CD14-positive monocyte (primary cell): ENCODE measurements at regions of chr19 and their contacts with region 1.

Region 1: DNA sequence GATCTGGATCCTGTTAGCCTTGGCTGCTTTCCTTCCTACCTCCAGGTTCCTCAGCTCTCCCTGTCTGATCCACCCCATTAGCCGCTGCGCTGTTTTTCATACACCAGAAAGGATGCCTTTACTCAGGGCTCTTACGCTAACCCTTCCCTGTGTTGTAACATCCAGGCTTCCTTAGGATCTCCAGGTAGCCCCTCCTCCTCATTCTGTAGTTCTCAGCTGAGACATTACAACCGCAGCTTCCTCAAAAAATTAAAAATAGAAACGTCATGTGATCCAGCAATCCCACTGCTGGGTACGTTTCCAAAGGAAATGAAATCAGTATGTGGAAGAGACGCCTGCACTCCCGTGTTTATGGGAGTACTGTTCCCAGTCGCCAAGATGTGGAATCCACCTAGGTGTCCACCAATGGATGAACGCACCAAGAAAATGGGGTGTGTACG is 18.4 kb upstream of the MYADM start:
- DNase-seq: peak; percentile 73 to 93 (median 89)
- H3K4me3 ChIP-seq: peak overlapping the region in 1 of 3 experiments; percentile 65
- H3K4me3 Mint-ChIP-seq: peak overlapping the region; percentile 56 to 88
- H3K27ac ChIP-seq: peak overlapping the region; percentile 67 to 76
- H3K27ac Mint-ChIP-seq: peak overlapping the region; percentile 87 to 98 (median 94)
- H3K4me1 ChIP-seq: peaks cover 87% of the 10 kb centered on the region in 2 donors
- H3K4me1 Mint-ChIP-seq: peaks cover 72% of the 10 kb centered on the region
- H3K27me3 ChIP-seq: no peaks in the 10 kb centered on the region
- H3K27me3 Mint-ChIP-seq: peaks cover 2 to 5% (median 3%) of the 10 kb centered on the region in 3 donors
- CTCF ChIP-seq: no peak

Region 2: DNA sequence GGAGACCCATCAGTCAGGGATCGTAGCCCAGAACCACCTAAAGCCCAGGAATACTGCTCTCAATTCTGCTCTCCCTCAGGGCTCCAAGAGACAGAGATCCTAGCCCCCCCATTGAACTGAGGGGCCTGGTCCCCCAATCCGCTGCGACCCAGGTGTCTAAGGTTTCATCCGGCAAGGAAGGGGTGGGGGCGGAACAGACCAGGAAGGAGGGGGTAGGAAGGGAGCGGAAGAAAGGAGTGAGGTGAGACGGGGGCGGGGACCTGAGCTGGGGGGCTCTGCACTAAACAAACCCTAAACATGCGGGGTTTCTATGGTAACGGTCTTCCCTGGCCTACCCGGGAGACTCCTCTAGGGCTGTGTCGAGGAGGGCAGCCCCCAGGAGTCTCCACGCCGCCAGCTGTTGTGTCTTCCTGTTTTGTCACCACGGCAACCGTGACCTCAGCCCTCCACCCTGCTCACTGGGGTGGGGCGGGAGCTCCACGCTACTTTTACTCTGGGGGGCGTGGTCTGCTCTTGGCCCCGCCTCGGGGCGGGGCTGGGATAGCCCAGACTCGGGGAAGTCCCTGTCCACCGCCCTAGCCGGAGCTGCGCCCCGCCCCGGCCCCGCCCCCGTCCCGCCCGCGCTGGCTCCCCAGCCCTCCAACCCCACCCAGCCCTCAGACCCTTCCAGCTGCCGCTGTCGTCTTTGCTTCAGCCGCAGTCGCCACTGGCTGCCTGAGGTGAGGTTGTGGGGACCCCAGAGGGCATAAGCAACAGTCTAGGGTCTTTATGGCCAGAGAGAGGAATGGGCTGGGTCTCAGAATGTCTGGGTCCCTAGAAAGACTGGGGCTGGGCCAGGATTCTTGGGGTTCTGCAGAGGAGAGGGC is 18.2 kb after region 1 on chr19 and contains the start of gene MYADM:
- intact Hi-C with region 1: loop called in 1 of 2 experiments (anchors 1 kb)
- DNase-seq: peak; percentile 99 to 100 (median 99)
- H3K4me3 ChIP-seq: peak within 1 kb of the TSS; percentile 77 to 100 (median 100)
- H3K4me3 Mint-ChIP-seq: peak within 1 kb of the TSS; percentile 97 to 99
- H3K27ac ChIP-seq: peak within 1 kb of the TSS; percentile 99
- H3K27ac Mint-ChIP-seq: peak within 1 kb of the TSS; percentile 98 to 100 (median 99)
- H3K4me1 ChIP-seq: peaks cover 47 to 52% of the 10 kb centered on the region in 2 donors
- H3K4me1 Mint-ChIP-seq: peaks cover 49% of the 10 kb centered on the region
- H3K27me3 ChIP-seq: no peaks in the 10 kb centered on the region
- H3K27me3 Mint-ChIP-seq: peaks cover 0 to 20% (median 18%) of the 10 kb centered on the region in 3 donors
- CTCF ChIP-seq: no peak
- polyA plus RNA-seq, gene MYADM: 162 to 310 (median 254) TPM

Region 3: GRCh38 chr19:53879140-53880081 is 30.2 kb after region 1 on chr19:
- intact Hi-C with region 1: loop called (anchors 5 kb)
- DNase-seq: peak; percentile 59 to 69 (median 67)
- H3K4me3 ChIP-seq: peak overlapping the region; percentile 28 to 79 (median 75)
- H3K4me3 Mint-ChIP-seq: no peak overlapping the region
- H3K27ac ChIP-seq: peak overlapping the region in 1 of 2 donors; percentile 16
- H3K27ac Mint-ChIP-seq: peak overlapping the region in 5 of 7 donors; percentile 6 to 75 (median 70)
- H3K4me1 ChIP-seq: peaks cover 54 to 70% of the 10 kb centered on the region in 2 donors
- H3K4me1 Mint-ChIP-seq: peaks cover 46% of the 10 kb centered on the region
- H3K27me3 ChIP-seq: peaks cover 32 to 40% of the 10 kb centered on the region in 2 donors
- H3K27me3 Mint-ChIP-seq: peaks cover 0 to 29% (median 25%) of the 10 kb centered on the region in 3 donors
- CTCF ChIP-seq: no peak